H1 (cell line): ENCODE measurements at regions of chr5 and their contacts with region 1.

Region 1: GRCh38 chr5:34587355-34588241 is 68.5 kb upstream of the RAI14 start:
- DNase-seq: no peak
- H3K4me3 ChIP-seq: no peak overlapping the region
- H3K27ac ChIP-seq: no peak overlapping the region
- H3K4me1 ChIP-seq: no peaks in the 10 kb centered on the region; a peak in 2 of 7 replicates
- H3K27me3 ChIP-seq: no peaks in the 10 kb centered on the region
- CTCF ChIP-seq: no peak
- EP300 ChIP-seq: no peak
- POLR2A ChIP-seq: no peak
- RAD21 ChIP-seq: no peak

Region 2: DNA sequence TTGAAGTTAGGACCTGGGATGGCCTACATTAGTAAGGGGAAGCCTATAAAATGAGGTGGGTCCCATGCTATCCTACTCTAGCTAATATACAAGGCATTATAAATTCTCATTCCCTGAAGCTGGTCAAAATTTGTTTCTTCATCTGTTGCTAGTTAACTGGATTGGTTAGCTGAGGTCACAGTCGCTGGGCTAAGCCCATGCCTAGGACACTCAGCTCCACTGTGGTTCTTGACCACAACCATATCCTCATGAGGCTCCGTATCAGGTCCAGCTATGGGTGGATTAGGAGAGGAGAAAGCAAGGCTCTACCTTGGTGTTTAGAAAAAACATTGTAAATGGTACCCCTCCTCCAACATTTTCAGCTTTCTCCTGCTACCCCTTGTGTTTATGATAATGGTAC is 15.8 kb after region 1 on chr5:
- CTCF ChIA-PET with region 1: interaction called, 10 read pairs
- POLR2A ChIA-PET with region 1: no interaction called
- DNase-seq: no peak
- H3K4me3 ChIP-seq: no peak overlapping the region
- H3K27ac ChIP-seq: no peak overlapping the region
- H3K4me1 ChIP-seq: peaks cover 0 to 2% (median 0%) of the 10 kb centered on the region in 4 experiments; a peak in 1 of 7 replicates
- H3K27me3 ChIP-seq: no peaks in the 10 kb centered on the region
- CTCF ChIP-seq: no peak
- EP300 ChIP-seq: no peak
- POLR2A ChIP-seq: no peak
- RAD21 ChIP-seq: no peak

Region 3: DNA sequence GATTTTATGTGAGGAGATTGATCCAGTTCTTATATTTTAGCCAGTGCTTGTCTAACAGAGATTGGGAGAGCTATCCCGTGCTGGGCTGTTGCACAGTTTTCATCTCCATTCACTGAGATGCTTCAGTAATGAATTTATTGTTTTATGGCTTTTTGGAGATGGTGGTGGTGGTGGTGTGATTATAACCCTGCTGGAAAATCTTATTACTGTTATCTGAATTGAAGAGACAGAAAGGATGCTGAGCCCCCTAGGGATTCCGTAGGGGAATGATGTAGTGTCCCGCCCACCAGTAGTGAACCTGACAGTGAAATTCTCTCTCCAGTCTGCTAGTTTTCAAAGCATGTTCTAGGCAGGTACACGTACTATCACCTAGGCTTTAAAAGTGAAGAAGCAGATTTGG is 70.4 kb after region 1 on chr5:
- CTCF ChIA-PET with region 1: no interaction called
- POLR2A ChIA-PET with region 1: no interaction called
- DNase-seq: no peak
- H3K4me3 ChIP-seq: peak overlapping the region; percentile 69 to 86 (median 80); a peak in 7 of 8 replicates
- H3K27ac ChIP-seq: no peak overlapping the region; the same call in 1 of the 2 replicates
- H3K4me1 ChIP-seq: peaks cover 9 to 20% (median 17%) of the 10 kb centered on the region in 4 experiments; a peak in 6 of 7 replicates
- H3K27me3 ChIP-seq: no peaks in the 10 kb centered on the region
- CTCF ChIP-seq: no peak
- EP300 ChIP-seq: no peak
- POLR2A ChIP-seq: no peak
- RAD21 ChIP-seq: no peak; a peak in 1 of 4 replicates

Region 4: GRCh38 chr5:34826347-34826746 is 238.7 kb after region 1 on chr5:
- CTCF ChIA-PET with region 1: no interaction called
- POLR2A ChIA-PET with region 1: no interaction called
- DNase-seq: no peak
- H3K4me3 ChIP-seq: no peak overlapping the region
- H3K27ac ChIP-seq: no peak overlapping the region
- H3K4me1 ChIP-seq: no peaks in the 10 kb centered on the region
- H3K27me3 ChIP-seq: no peaks in the 10 kb centered on the region
- CTCF ChIP-seq: 0 out of 4 replicates have a peak, but pooled peaks of 1 of the 3 experiments have one; percentile 3
- EP300 ChIP-seq: no peak
- POLR2A ChIP-seq: no peak
- RAD21 ChIP-seq: peak in 1 of 2 experiments; percentile 15; a peak in 1 of 4 replicates